ENCODE measurements at regions of chr19 and their contacts with region 1.

Region 1: DNA sequence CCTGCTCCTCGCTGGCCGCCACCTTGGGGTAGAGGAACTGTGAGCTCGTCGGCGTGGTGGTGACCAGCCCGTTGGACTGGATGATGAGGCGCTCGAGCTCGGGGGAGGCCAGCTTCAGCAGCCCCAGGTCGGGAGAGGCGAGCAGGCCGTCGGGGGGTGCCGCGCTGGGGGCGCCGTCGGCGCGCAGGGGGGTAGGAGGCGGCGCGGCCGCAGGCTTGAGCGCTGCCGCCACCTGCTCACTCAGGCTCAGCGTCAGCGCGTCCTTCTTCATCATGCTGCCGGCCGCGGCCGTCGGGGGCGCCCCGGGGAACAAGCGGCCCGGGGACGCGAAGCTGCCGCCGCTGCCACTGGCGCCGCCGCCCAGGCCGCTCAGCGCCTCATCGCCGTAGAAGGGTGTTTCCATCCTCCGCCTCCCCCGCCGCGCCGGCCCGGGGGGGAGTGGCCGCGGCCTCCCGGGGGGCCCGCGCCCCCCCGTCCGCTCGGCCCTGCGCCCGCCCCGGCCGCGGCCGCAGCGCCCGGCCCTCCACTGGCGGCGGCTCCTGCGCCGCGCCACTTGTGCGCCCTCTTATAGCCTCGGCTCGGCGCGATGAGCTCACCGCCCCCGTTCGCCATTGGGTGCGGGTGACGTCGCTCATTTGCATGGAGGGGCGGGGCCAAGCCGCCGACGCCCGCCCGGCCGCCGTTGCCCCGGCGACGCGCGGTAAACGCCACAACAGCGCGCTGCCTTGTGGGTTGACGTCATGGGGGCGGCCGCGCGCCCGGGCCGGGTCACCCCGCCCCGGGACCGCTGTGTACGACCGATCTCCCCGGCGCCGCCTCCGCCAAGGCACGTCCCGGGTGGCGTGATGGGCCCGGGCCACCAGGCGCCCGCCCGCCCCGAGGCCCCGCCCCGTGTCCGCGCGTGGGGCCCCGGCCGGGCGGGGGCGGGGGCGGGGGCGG is at the start of gene JUND:
- DNase-seq: peak; percentile 99
- ATAC-seq: peak; percentile 73
- H3K4me3 Mint-ChIP-seq: peak within 1 kb of the TSS; percentile 90
- H3K27ac Mint-ChIP-seq: peak within 1 kb of the TSS; percentile 98
- H3K4me1 Mint-ChIP-seq: peaks cover 39% of the 10 kb centered on the region
- H3K27me3 Mint-ChIP-seq: no peaks in the 10 kb centered on the region
- total RNA-seq, gene JUND: 366 to 394 TPM

Region 2: DNA sequence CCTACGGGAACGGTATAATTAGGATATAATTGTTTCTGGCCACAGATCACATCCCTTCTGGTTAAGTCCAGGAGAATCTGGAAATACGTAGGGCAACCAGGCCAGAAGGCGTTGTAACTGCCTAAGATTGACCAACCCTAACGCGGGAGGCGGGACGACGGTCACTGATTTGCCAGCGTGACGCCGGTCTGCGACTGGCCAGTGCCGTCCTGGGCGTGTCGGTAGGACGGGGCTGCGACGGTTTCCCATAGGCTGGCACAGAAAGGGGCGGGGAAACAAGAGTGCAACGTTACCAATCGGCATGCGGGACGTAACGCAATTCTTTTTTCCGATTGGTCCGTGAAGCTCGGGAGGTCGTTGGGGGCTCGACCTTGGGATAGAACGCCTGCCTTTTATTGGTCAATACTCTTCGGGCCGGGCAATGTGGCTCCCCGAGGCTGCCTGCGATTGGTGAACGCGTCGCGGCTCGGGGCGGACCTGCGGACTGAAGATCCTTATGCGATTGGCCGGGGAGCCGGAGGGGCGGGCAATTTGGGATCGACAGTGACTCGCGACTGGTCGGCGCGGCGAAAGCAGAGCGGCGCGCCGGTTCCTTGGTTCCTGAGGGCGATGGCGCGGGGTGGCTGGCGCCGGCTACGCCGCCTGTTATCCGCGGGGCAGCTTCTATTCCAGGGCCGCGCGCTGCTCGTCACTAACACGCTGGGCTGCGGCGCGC is 88.5 kb before region 1 on chr19 and contains the start of gene MPV17L2:
- POLR2A ChIA-PET with region 1: interaction called, 24 read pairs
- DNase-seq: peak; percentile 96
- ATAC-seq: peak; percentile 95
- H3K4me3 Mint-ChIP-seq: peak within 1 kb of the TSS; percentile 89
- H3K27ac Mint-ChIP-seq: peak within 1 kb of the TSS; percentile 88
- H3K4me1 Mint-ChIP-seq: peaks cover 15% of the 10 kb centered on the region
- H3K27me3 Mint-ChIP-seq: no peaks in the 10 kb centered on the region
- total RNA-seq, gene MPV17L2: 5.8 to 6.5 TPM

Region 3: DNA sequence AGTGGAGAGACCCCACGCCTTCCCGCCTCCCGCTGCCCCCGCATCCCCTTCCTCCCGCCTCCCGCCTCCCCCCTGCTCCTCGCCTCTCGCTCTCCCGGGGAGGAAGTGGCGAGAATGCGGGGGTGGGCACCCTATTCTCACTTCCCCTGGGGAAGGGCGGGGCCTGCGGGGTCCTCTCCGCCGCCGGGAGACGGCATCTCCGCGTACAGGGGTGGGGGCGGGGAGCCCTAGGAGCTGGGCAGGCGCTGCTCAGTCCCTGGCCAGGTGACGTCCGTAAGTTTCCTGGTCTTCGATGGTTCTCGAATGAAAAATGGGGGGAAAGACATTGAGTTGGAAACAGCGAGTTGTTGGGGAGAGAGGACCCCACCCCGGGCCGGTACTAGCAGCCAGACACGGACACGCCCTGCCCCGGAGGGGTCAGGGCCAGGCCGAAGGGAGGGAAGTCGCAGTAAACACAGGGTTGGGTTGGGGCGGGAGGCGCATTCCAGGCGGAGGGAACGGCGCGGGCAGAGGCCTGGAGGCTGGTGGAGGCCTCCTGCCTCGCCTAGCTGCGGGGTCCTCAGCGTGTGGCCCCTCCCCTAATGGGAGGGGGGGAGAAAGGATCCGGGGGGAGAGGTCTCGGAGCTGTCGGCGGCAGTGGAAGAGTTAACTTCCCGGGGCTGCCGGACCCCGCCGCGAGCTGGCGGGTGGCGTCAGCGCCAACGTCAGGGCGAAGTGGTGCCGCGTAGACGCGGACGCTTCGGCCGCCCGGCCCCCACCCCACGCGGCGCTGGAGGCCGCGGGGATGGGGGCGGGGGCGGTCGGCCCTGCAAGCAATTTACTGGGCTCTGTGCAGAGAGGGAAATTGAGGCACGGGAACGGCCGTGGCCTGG is 10.5 kb after region 1 on chr19:
- POLR2A ChIA-PET with region 1: interaction called, 846 read pairs
- DNase-seq: peak; percentile 87
- ATAC-seq: peak; percentile 40
- H3K4me3 Mint-ChIP-seq: peak overlapping the region; percentile 94
- H3K27ac Mint-ChIP-seq: peak overlapping the region; percentile 91
- H3K4me1 Mint-ChIP-seq: peaks cover 52% of the 10 kb centered on the region
- H3K27me3 Mint-ChIP-seq: no peaks in the 10 kb centered on the region

Region 4: DNA sequence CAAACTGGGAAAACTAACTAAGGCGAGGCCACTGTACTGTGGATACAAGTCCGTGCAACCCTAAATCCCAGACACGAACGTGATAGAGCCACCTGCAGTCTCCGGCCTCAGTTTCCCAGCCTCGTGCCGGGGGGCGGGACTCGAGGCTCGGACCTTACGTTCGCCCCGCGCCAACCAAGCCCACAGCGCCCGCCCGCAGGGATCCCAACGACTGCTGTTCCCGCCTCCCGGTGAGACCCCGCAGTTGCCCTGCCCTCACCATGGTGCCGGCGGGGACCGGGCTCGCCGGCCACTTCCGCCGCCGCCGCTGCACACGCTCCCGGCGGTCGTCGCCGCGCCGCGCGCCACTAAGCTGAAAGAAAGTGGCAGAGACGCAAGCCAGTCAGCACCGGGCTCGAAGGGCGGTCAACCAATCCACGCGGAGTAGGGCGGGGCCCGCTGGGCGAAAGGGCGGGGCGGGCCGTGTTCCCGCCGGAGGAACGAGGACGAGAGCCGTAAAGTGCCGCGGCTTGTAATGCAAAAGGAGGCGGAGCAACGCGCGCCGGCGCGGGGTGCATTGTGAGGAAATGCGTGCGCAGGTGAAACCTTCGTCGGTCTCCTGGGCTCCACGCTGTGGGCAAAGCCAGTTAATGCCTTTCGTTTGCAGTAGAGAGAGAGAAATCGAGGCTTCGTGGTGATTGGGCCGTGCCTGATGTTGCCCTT is 41.6 kb after region 1 on chr19 and contains the start of gene LSM4:
- POLR2A ChIA-PET with region 1: interaction called, 1,033 read pairs
- DNase-seq: peak; percentile 99
- ATAC-seq: peak; percentile 94
- H3K4me3 Mint-ChIP-seq: peak within 1 kb of the TSS; percentile 94
- H3K27ac Mint-ChIP-seq: peak within 1 kb of the TSS; percentile 97
- H3K4me1 Mint-ChIP-seq: peaks cover 46% of the 10 kb centered on the region
- H3K27me3 Mint-ChIP-seq: no peaks in the 10 kb centered on the region
- total RNA-seq, gene LSM4: 151 to 157 TPM

Region 5: GRCh38 chr19:18340190-18340989 is 59.0 kb after region 1 on chr19 and contains the start of gene PGPEP1:
- POLR2A ChIA-PET with region 1: interaction called, 37 read pairs
- DNase-seq: peak; percentile 83
- ATAC-seq: peak; percentile 48
- H3K4me3 Mint-ChIP-seq: peak within 1 kb of the TSS; percentile 80
- H3K27ac Mint-ChIP-seq: peak within 1 kb of the TSS; percentile 83
- H3K4me1 Mint-ChIP-seq: peaks cover 14% of the 10 kb centered on the region
- H3K27me3 Mint-ChIP-seq: no peaks in the 10 kb centered on the region
- total RNA-seq, gene PGPEP1: 41.3 to 45.7 TPM

Measured in activated naive CD8-positive, alpha-beta T cell treated with anti-CD3 and anti-CD28 coated beads, Interleukin-2, amount 10 ng/mL, durations not matched to agents 7 days and 5 days (primary cell).